CD4-positive, alpha-beta memory T cell (primary cell): ENCODE measurements at regions of chrX and their contacts with region 1.

Region 1: GRCh38 chrX:136577552-136577951 is 45.5 kb downstream of the VGLL1 start:
- DNase-seq: peak; percentile 67 to 77 (median 72)
- H3K4me3 ChIP-seq: no peak overlapping the region
- H3K4me3 Mint-ChIP-seq: peak overlapping the region in 5 of 8 donors; percentile 31 to 58 (median 44)
- H3K27ac ChIP-seq: peak overlapping the region; percentile 38
- H3K27ac Mint-ChIP-seq: peak overlapping the region; percentile 59 to 93 (median 89)
- H3K4me1 ChIP-seq: peaks cover 25% of the 10 kb centered on the region
- H3K4me1 Mint-ChIP-seq: peaks cover 10 to 33% (median 17%) of the 10 kb centered on the region in 4 donors
- H3K27me3 ChIP-seq: no peaks in the 10 kb centered on the region
- H3K27me3 Mint-ChIP-seq: no peaks in the 10 kb centered on the region

Region 2: DNA sequence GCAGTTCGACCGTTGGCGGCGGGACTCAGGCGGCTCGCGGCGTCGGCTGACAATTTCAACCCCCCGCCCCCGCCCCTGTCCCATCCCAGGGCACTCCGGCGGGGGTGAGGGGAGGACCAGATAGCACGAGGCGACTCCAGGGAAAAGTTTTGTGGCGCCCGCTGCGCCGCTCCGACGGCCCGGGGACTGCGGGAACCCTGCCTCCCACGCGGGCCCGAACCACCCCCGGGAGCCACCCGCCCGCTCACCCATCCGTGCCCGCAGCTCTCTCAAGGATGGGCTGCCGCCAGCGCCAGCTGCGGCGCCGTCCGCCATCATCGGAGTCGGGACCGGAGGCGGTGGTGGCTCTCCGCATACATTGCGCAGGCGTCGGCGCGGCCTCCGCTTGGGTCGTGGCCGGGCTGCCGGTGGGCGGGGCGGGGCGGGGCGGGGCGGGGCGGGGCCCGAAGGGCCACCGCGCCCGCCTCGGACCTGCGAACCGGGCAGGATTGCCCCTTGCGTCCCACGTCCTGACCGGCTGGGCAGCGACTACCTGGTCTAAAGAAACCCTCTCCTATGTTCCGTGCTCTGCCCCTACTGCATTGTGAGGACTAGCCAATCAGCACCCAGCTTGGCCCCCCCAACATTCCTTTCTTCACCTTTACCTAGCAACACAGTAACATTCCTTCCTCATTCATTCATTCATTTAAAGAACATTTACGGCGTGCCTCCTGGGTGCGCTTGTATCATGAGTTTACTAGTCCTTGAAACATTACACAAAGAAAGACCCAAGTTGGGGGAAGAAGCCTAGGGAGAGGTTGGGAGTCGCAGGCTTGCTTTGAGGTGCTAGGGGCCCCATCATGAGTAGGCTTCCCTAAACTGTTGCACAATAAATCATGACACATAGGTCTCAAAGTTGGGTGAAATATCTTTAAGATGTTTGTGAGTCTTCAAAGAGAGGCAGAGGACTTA is 326.2 kb before region 1 on chrX and contains the start of gene MAP7D3:
- CTCF ChIA-PET with region 1: no interaction called
- POLR2A ChIA-PET with region 1: no interaction called
- intact Hi-C with region 1: loop called (anchors 10 kb)
- DNase-seq: peak; percentile 67 to 75 (median 73)
- H3K4me3 ChIP-seq: peak within 1 kb of the TSS; percentile 23 to 60
- H3K4me3 Mint-ChIP-seq: peak within 1 kb of the TSS; percentile 86 to 94 (median 88)
- H3K27ac ChIP-seq: peak within 1 kb of the TSS; percentile 46
- H3K27ac Mint-ChIP-seq: peak within 1 kb of the TSS; percentile 78 to 97 (median 88)
- H3K4me1 ChIP-seq: peaks cover 14% of the 10 kb centered on the region
- H3K4me1 Mint-ChIP-seq: peaks cover 2 to 12% (median 5%) of the 10 kb centered on the region in 4 donors
- H3K27me3 ChIP-seq: no peaks in the 10 kb centered on the region
- H3K27me3 Mint-ChIP-seq: no peaks in the 10 kb centered on the region
- total RNA-seq, gene MAP7D3: 8.5 to 10.1 TPM

Region 3: DNA sequence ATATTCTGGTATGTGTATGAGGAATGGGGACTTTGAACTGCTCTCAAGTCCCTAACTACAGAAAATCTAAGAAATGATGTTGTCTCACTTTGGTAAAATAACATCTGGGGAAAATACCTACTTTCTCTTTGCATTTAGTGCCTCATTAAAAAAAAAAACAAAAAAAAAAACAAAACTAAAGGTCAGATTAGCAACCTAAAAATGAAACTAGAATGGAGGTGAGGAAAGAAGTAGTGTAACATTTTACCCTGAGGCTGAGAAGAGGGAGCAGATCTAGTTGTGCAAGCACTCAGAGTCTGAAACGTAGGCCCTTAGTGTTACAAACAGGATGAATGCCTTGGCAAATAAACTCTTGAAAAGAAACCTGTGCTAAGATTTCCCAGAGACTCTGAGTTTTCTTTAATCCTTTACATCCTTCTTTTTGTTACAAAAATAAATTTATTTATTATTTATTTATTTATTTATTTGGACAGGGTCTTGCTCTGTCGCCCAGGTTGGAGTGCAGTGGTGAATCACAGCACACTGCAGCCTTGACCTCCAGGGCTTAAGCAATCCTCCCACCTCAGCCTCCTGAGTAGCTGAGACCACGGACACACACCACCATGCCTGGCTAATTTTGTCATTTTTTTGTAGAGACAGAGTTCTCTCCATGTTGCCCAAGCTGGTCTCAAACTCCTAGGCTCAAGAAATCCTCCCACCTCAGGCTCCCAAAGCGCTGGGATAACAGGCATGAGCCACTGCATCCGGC is 10.7 kb after region 1 on chrX:
- CTCF ChIA-PET with region 1: interaction called, 16 read pairs
- POLR2A ChIA-PET with region 1: interaction called, 31 read pairs
- intact Hi-C with region 1: loop called (anchors 1 kb)
- DNase-seq: peak in 4 of 5 donors; percentile 26 to 54 (median 38)
- H3K4me3 ChIP-seq: no peak overlapping the region
- H3K4me3 Mint-ChIP-seq: peak overlapping the region in 7 of 8 donors; percentile 24 to 86 (median 49)
- H3K27ac ChIP-seq: peak overlapping the region; percentile 71
- H3K27ac Mint-ChIP-seq: peak overlapping the region; percentile 90 to 97 (median 93)
- H3K4me1 ChIP-seq: peaks cover 69% of the 10 kb centered on the region
- H3K4me1 Mint-ChIP-seq: peaks cover 40 to 70% (median 53%) of the 10 kb centered on the region in 4 donors
- H3K27me3 ChIP-seq: no peaks in the 10 kb centered on the region
- H3K27me3 Mint-ChIP-seq: no peaks in the 10 kb centered on the region

Region 4: DNA sequence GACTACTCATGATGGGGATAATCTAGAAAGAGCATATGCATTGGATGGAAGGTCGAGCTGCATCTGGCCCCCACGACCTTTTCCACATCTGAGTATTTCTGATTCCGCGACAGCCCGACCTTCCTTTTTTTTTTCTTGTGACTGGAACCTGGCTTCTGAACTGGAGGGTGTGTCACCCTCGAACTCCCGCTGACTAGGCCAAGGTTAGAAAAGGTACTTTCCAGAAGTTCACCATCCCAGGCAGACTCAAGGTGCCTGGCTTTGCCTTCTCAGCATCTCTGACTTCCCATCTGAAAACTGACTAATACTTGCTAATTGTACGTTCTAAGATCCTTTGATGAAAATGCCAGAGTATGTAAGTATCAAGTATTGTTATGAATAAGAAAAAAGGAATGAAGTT is 21.1 kb after region 1 on chrX:
- CTCF ChIA-PET with region 1: interaction called, 10 read pairs
- POLR2A ChIA-PET with region 1: interaction called, 16 read pairs
- intact Hi-C with region 1: no loop called
- DNase-seq: peak in 2 of 5 donors; percentile 50 to 68
- H3K4me3 ChIP-seq: no peak overlapping the region
- H3K4me3 Mint-ChIP-seq: peak overlapping the region; percentile 54 to 87 (median 68)
- H3K27ac ChIP-seq: peak overlapping the region; percentile 40
- H3K27ac Mint-ChIP-seq: peak overlapping the region; percentile 81 to 94 (median 92)
- H3K4me1 ChIP-seq: peaks cover 54% of the 10 kb centered on the region
- H3K4me1 Mint-ChIP-seq: peaks cover 30 to 62% (median 46%) of the 10 kb centered on the region in 4 donors
- H3K27me3 ChIP-seq: no peaks in the 10 kb centered on the region
- H3K27me3 Mint-ChIP-seq: no peaks in the 10 kb centered on the region

Region 5: DNA sequence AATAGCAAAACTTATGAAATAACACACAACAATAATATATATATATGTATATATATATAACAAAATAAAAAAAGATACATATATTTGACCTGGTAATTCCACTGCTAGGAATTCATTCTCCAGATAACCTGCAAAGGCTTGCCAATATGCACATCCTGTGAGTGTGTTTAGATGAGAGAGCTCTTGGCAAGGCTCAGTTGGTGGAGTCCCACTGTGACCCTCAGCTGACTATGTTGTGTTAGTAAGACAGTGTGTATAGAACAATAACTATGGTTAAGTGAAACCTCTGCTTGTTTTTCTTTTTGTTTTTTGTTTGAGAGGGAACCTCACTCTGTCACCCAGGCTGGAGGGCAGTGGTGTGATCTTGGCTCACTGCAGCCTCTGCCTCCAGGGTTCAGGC is 342.4 kb after region 1 on chrX:
- CTCF ChIA-PET with region 1: interaction called, 4 read pairs
- POLR2A ChIA-PET with region 1: no interaction called
- intact Hi-C with region 1: loop called (anchors 10 kb)
- DNase-seq: no peak
- H3K4me3 ChIP-seq: no peak overlapping the region
- H3K4me3 Mint-ChIP-seq: no peak overlapping the region
- H3K27ac ChIP-seq: no peak overlapping the region
- H3K27ac Mint-ChIP-seq: no peak overlapping the region
- H3K4me1 ChIP-seq: peaks cover 3% of the 10 kb centered on the region
- H3K4me1 Mint-ChIP-seq: peaks cover 1 to 3% (median 2%) of the 10 kb centered on the region in 4 donors
- H3K27me3 ChIP-seq: no peaks in the 10 kb centered on the region
- H3K27me3 Mint-ChIP-seq: no peaks in the 10 kb centered on the region

Region 6: DNA sequence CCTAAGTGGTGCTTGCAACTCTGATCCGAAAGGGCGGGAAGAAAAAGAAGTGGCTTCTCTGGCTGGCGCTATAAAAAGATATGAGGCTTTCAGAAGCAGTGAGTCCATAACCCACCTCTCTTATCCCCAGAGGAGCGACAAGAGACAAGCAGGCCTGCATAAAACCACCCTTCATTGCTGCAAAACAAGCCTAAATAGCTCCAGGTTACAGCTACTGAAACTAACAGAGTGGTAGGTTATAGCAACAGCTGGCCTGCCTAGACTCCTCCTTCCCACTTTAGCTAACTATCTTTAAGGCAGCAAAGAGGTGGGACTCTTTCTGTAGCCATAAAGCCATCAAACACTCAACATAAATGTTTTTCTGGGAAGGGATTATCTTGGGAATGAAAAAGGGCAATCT is 701.3 kb after region 1 on chrX:
- CTCF ChIA-PET with region 1: no interaction called
- POLR2A ChIA-PET with region 1: no interaction called
- intact Hi-C with region 1: no loop called
- DNase-seq: no peak
- H3K4me3 ChIP-seq: no peak overlapping the region
- H3K4me3 Mint-ChIP-seq: no peak overlapping the region
- H3K27ac ChIP-seq: no peak overlapping the region
- H3K27ac Mint-ChIP-seq: no peak overlapping the region
- H3K4me1 ChIP-seq: no peaks in the 10 kb centered on the region
- H3K4me1 Mint-ChIP-seq: no peaks in the 10 kb centered on the region
- H3K27me3 ChIP-seq: no peaks in the 10 kb centered on the region
- H3K27me3 Mint-ChIP-seq: peaks cover 0 to 5% of the 10 kb centered on the region in 2 donors